ENCODE measurements at regions of chr12 and their contacts with region 1.

Region 1: GRCh38 chr12:85029456-85029855 is 6.6 kb downstream of the TSPAN19 start:
- H3K4me3 Mint-ChIP-seq: no peak overlapping the region
- H3K27ac Mint-ChIP-seq: no peak overlapping the region
- H3K4me1 Mint-ChIP-seq: no peaks in the 10 kb centered on the region
- H3K27me3 Mint-ChIP-seq: peaks cover 4% of the 10 kb centered on the region

Region 2: DNA sequence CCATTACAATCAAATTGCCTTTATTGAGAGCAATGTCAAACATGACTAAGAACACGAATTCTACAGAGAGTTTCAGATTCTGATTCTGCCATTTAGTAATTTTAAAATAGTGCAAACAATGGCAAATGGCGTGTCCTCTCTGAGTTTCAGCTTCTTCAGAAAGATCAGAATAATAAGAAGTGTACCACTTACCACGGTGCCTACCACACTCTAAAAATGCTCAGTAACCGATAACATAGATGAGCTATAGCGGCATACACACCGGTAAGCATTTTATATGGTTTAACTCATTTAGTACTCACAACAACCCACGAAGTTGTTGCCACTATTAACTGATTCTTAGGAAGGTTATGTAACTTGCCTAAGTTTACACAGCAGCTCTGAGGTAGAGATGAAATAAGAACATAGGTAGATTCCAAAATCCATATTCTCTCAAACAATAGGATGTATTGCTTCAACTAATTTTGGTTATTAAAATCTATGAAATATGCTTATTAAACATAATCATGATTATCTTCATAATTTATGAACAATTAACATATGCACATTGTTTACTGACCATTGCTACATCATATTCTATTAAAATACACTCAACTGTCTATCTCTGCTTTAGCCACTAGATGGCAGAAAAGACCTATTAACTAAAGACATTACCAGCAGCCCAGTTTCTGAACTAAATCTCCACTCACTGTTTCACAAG is 155.2 kb before region 1 on chr12:
- intact Hi-C with region 1: loop called (anchors 1 kb)
- H3K4me3 Mint-ChIP-seq: no peak overlapping the region
- H3K27ac Mint-ChIP-seq: no peak overlapping the region
- H3K4me1 Mint-ChIP-seq: no peaks in the 10 kb centered on the region
- H3K27me3 Mint-ChIP-seq: no peaks in the 10 kb centered on the region

Region 3: GRCh38 chr12:84946753-84947152 is 82.7 kb before region 1 on chr12:
- intact Hi-C with region 1: no loop called
- H3K4me3 Mint-ChIP-seq: no peak overlapping the region
- H3K27ac Mint-ChIP-seq: no peak overlapping the region
- H3K4me1 Mint-ChIP-seq: no peaks in the 10 kb centered on the region
- H3K27me3 Mint-ChIP-seq: no peaks in the 10 kb centered on the region

Measured in dendritic cell treated with granulocyte-macrophage colony-stimulating factor and Interleukin-4, amounts not matched to agents 40 ng/mL and 50 ng/mL, for 4 days (primary cell).